AG04450 (cell line): ENCODE measurements at regions of chr22 and their contacts with region 1.

Region 1: GRCh38 chr22:19879695-19880506 is 25.2 kb upstream of the GNB1L start:
- DNase-seq: no peak
- H3K4me3 ChIP-seq: no peak overlapping the region
- H3K27ac ChIP-seq: peak overlapping the region; percentile 47
- H3K27me3 ChIP-seq: no peaks in the 10 kb centered on the region
- CTCF ChIP-seq: no peak

Region 2: DNA sequence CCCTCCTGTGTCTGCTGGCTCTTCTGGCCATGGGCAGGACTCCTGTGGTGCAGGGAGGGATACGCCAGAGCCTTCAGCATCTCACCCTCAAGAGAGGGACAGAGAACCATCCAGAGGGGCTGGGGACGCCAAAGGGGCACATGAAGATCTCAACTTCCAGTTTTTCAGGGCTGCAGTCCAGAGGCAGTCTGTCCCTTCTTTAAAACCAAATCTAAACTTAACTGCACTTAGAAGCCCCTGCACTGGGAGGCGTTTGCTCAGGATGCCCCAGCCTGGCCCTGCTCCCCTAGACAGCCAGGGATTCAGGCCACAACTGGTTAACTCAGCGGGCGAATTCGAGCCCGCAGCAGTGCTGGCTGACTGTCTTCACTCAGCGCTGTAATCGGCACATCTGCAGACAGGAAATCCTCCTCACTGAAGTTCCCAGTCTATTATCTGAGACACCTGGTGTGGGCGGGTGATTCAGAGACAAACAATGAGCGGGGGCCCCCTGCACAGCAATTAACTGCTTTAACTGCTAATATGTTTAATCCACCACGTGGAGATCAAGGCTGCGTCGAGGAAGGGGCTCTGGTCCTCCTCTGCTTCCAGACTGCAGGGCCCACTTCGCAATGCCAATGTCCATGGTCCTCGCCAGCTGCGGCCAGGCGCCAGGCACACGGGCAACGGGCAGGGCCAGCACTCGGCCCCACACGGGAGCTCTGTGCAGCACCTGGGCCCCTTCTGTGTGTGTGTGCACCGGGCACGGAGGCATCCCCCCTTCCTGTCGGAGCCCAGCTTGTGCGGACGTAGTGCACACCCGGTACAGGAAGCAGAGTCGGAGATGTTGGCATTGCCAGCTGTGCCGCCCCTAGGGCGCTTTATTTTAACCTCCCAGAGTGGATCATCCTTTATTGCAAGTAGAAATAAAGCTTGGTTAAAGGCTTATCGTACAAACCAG is 11.7 kb after region 1 on chr22:
- CTCF ChIA-PET with region 1: no interaction called
- POLR2A ChIA-PET with region 1: interaction called, 10 read pairs
- DNase-seq: peak; percentile 59
- H3K4me3 ChIP-seq: peak overlapping the region; percentile 25
- H3K27ac ChIP-seq: peak overlapping the region; percentile 88
- H3K27me3 ChIP-seq: no peaks in the 10 kb centered on the region
- CTCF ChIP-seq: no peak